ENCODE measurements at regions of chr14 and their contacts with region 1.

Region 1: DNA sequence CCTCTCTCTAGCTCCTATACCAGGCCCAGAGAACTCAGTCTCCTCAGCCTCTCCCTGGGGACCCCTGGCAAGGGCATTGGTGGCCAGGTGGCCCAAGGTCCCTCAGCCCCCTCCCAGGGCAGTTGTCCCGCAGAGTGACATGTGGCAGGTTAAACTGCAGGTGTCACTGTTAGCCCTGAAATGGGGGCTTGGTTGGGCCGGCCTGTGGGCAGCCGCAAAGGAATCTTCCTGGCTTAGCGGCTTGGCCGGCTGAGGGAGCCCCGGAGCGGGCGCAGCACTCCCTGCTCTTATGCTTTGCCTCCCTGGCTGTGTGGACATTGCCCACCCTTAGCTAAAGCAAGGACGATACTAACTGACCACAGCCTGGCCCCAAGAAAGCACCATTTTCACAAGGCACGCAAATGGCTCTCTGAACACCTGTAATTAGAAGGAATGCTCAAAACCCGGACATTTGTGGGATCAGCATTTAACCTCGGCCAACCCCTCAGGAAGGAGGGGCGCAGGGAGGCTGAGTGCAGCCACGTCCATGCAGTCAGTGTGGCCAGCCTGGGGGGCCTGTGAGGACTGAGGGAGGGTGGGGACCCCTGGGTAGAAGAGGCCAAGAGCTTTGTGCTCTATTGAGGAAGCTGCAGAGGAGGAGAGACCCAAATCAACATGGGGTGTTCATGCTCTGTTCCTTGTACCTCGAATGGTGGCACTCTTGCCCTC is 82.2 kb downstream of the PAPOLA start:
- DNase-seq: peak; percentile 43
- H3K4me3 ChIP-seq: no peak overlapping the region
- H3K27ac ChIP-seq: no peak overlapping the region
- H3K4me1 ChIP-seq: no peaks in the 10 kb centered on the region
- H3K27me3 ChIP-seq: peaks cover 21% of the 10 kb centered on the region; the same call in 1 of the 2 replicates

Region 2: DNA sequence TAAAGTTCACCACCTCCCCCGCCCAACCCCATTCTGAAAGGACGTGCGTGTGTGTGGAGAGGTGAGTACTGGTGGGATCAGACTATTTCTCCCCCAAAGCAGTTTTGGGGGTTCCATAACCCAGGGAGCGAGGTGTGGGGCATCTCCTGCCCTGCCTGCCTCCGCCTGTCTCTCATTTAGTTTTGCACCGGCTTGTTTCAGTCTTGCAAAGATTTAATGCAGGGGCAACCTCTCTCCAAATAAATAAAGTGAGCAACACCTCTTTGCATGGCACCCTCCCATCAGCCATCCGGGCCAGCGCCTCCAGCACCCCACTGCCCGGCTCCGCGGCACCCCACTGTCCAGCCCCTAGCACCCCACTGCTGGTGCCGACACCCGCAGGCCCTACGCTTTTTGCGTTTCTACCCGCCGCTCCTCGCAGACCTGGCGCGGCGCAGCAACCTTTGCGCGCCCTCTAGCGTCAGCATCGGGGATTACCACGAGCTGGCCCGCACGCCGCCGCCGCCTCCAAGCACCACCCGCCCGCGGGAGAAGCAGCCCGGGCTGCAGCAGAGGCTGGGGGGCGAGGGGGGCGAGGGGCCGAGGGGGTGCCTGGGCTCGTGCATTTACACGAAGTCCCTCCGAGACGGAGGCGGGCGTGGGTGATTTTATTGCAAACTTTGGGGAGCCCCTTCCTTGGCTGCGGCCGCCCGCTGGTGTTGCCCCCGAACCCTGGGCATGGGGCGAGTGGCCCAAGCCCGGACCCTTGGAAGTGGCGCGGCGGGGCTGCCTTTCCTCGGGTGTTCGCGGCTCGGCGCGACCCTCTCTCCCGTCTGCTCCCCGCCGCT is 157.0 kb after region 1 on chr14:
- in situ Hi-C with region 1: loop called (anchors 10 kb)
- DNase-seq: peak; percentile 68
- H3K4me3 ChIP-seq: peak overlapping the region; percentile 75
- H3K27ac ChIP-seq: no peak overlapping the region
- H3K4me1 ChIP-seq: no peaks in the 10 kb centered on the region
- H3K27me3 ChIP-seq: peaks cover 53% of the 10 kb centered on the region